ENCODE measurements at regions of chr12 and their contacts with region 1.

Region 1: GRCh38 chr12:89542912-89543592 is 17.2 kb upstream of the POC1B start:
- DNase-seq: peak; percentile 64 to 72 (median 69)
- H3K4me3 ChIP-seq: no peak overlapping the region
- H3K4me3 Mint-ChIP-seq: peak overlapping the region in 1 of 8 donors; percentile 18
- H3K27ac ChIP-seq: no peak overlapping the region
- H3K27ac Mint-ChIP-seq: peak overlapping the region in 4 of 7 donors; percentile 14 to 41 (median 36)
- H3K4me1 ChIP-seq: no peaks in the 10 kb centered on the region
- H3K4me1 Mint-ChIP-seq: peaks cover 4 to 16% (median 10%) of the 10 kb centered on the region in 4 donors
- H3K27me3 ChIP-seq: no peaks in the 10 kb centered on the region
- H3K27me3 Mint-ChIP-seq: peaks cover 0 to 3% of the 10 kb centered on the region in 2 donors

Region 2: DNA sequence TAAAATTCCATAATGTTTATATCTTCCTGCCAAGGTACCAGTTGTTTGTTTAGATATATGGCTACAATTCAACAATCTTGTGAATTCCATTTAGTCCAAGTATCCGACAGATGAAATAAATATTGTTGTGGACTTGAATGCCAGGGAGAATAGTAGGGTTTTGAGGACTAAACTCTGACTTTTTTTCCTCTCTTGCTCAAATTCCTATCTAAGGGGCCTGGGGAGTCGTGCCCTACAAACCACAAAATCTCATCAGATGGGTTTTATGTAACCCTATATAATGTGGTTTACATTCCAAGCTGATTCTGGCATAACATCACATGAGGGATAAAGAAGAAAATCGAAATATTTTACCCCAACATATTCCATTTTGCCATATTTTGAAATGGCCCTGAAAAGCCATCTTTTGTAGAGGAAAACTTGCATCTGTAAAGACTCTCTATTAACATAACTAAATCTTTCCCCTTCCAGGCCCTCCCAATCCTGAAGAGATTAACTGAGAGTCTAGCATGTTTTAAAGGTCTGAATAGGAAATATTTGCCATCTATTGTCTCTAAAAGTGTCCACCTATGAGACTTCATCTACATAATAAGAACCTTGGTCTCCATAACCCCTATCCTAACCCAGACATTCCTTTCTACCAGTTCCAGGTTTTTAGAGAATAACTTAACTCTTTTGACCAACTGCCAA is 778.1 kb before region 1 on chr12:
- CTCF ChIA-PET with region 1: no interaction called
- POLR2A ChIA-PET with region 1: no interaction called
- intact Hi-C with region 1: no loop called
- DNase-seq: no peak
- H3K4me3 ChIP-seq: no peak overlapping the region
- H3K4me3 Mint-ChIP-seq: no peak overlapping the region
- H3K27ac ChIP-seq: no peak overlapping the region
- H3K27ac Mint-ChIP-seq: no peak overlapping the region
- H3K4me1 ChIP-seq: no peaks in the 10 kb centered on the region
- H3K4me1 Mint-ChIP-seq: no peaks in the 10 kb centered on the region
- H3K27me3 ChIP-seq: no peaks in the 10 kb centered on the region
- H3K27me3 Mint-ChIP-seq: no peaks in the 10 kb centered on the region

Region 3: GRCh38 chr12:89192428-89192827 is 350.6 kb before region 1 on chr12:
- CTCF ChIA-PET with region 1: no interaction called
- POLR2A ChIA-PET with region 1: no interaction called
- intact Hi-C with region 1: no loop called
- DNase-seq: no peak
- H3K4me3 ChIP-seq: no peak overlapping the region
- H3K4me3 Mint-ChIP-seq: no peak overlapping the region
- H3K27ac ChIP-seq: no peak overlapping the region
- H3K27ac Mint-ChIP-seq: no peak overlapping the region
- H3K4me1 ChIP-seq: no peaks in the 10 kb centered on the region
- H3K4me1 Mint-ChIP-seq: no peaks in the 10 kb centered on the region
- H3K27me3 ChIP-seq: no peaks in the 10 kb centered on the region
- H3K27me3 Mint-ChIP-seq: no peaks in the 10 kb centered on the region

Region 4: GRCh38 chr12:89363084-89363483 is 180.0 kb before region 1 on chr12:
- CTCF ChIA-PET with region 1: no interaction called
- POLR2A ChIA-PET with region 1: no interaction called
- intact Hi-C with region 1: no loop called
- DNase-seq: no peak
- H3K4me3 ChIP-seq: no peak overlapping the region
- H3K4me3 Mint-ChIP-seq: no peak overlapping the region
- H3K27ac ChIP-seq: no peak overlapping the region
- H3K27ac Mint-ChIP-seq: no peak overlapping the region
- H3K4me1 ChIP-seq: no peaks in the 10 kb centered on the region
- H3K4me1 Mint-ChIP-seq: peaks cover 0 to 1% (median 0%) of the 10 kb centered on the region in 4 donors
- H3K27me3 ChIP-seq: no peaks in the 10 kb centered on the region
- H3K27me3 Mint-ChIP-seq: no peaks in the 10 kb centered on the region

Region 5: DNA sequence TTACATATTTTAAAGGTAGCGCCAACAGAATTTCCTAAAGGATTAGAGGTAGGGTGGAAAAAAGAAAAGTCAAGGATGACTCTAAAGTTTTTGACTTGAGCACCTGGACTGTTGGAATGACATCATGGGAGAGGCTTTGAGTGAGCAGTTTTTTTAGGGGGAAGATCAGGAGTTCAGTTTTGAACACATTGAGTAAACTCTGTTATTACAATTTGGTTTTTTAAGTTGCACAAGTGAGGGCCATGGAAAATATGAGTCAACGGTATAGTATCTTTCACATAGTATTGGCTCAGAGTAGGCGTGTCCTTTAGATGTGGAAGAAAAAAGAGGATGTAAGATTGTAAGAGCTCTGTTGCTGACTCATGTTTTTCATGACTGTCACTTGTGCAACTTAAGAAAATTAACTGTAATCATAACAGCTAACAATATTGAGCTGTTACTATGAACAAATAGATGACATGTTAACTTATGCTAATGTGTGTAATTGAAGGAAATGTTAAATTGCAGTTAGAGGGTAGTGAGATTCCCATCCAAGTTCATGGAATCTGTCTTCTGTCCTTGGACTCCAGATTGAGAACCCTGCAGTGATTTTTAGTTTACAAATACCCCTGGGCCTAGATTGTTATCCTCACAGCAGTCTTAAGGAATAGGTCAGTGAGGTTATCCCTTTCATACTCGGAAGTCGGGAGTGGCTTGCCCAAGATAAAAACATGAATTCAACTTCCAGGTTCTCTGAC is 213.7 kb after region 1 on chr12:
- CTCF ChIA-PET with region 1: no interaction called
- POLR2A ChIA-PET with region 1: no interaction called
- intact Hi-C with region 1: no loop called
- DNase-seq: peak; percentile 33 to 63 (median 59)
- H3K4me3 ChIP-seq: no peak overlapping the region
- H3K4me3 Mint-ChIP-seq: peak overlapping the region in 3 of 8 donors; percentile 21 to 60 (median 47)
- H3K27ac ChIP-seq: no peak overlapping the region
- H3K27ac Mint-ChIP-seq: peak overlapping the region; percentile 54 to 92 (median 76)
- H3K4me1 ChIP-seq: peaks cover 43% of the 10 kb centered on the region
- H3K4me1 Mint-ChIP-seq: peaks cover 38 to 54% (median 44%) of the 10 kb centered on the region in 4 donors
- H3K27me3 ChIP-seq: no peaks in the 10 kb centered on the region
- H3K27me3 Mint-ChIP-seq: no peaks in the 10 kb centered on the region

Region 6: GRCh38 chr12:89856431-89856830 is 313.4 kb after region 1 on chr12:
- CTCF ChIA-PET with region 1: interaction called, 51 read pairs
- POLR2A ChIA-PET with region 1: no interaction called
- intact Hi-C with region 1: loop called (anchors 1 kb)
- DNase-seq: no peak
- H3K4me3 ChIP-seq: no peak overlapping the region
- H3K4me3 Mint-ChIP-seq: peak overlapping the region in 5 of 8 donors; percentile 32 to 61 (median 47)
- H3K27ac ChIP-seq: no peak overlapping the region
- H3K27ac Mint-ChIP-seq: peak overlapping the region in 6 of 7 donors; percentile 13 to 78 (median 50)
- H3K4me1 ChIP-seq: peaks cover 42% of the 10 kb centered on the region
- H3K4me1 Mint-ChIP-seq: peaks cover 36 to 65% (median 45%) of the 10 kb centered on the region in 4 donors
- H3K27me3 ChIP-seq: no peaks in the 10 kb centered on the region
- H3K27me3 Mint-ChIP-seq: no peaks in the 10 kb centered on the region

Region 7: DNA sequence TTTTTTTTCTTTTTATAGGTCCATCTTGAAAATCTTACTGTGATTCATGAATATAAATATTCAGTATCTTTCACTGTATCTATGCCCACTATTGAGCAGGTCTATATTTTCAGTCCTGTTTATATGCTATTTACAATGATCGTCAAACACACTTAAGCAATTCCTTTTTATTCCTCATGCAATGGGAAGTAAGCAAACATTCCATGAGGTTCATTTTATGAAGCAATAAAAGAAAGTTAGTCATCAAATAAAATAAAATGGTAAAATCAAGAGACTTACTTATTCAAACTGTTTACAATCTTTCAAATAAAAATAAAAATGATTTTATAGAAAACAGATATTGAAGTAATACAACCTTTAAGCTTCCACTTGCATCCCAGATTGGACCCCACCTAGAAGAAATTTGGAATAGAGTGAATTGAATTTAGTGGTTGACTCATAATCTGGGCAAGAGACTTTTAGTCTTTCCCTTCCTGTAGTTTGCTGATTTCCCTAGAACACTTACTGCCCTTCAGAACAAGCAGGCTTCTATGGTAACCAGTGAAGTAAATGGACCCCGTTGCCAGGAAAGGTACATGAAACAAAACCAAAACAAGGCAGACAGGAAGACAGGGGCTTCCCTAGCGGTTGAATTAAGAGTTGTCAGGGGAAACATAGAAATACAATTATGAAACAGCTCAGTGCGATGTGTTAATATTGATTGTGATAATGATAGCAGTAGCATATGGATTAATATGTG is 406.6 kb after region 1 on chr12:
- CTCF ChIA-PET with region 1: interaction called, 11 read pairs
- POLR2A ChIA-PET with region 1: no interaction called
- intact Hi-C with region 1: loop called (anchors 1 kb)
- DNase-seq: peak; percentile 87 to 94 (median 90)
- H3K4me3 ChIP-seq: no peak overlapping the region
- H3K4me3 Mint-ChIP-seq: peak overlapping the region; percentile 11 to 77 (median 59)
- H3K27ac ChIP-seq: peak overlapping the region; percentile 83
- H3K27ac Mint-ChIP-seq: peak overlapping the region; percentile 74 to 98 (median 93)
- H3K4me1 ChIP-seq: peaks cover 53% of the 10 kb centered on the region
- H3K4me1 Mint-ChIP-seq: peaks cover 49 to 64% (median 58%) of the 10 kb centered on the region in 4 donors
- H3K27me3 ChIP-seq: no peaks in the 10 kb centered on the region
- H3K27me3 Mint-ChIP-seq: no peaks in the 10 kb centered on the region

Region 8: GRCh38 chr12:90062799-90063198 is 519.7 kb after region 1 on chr12:
- CTCF ChIA-PET with region 1: no interaction called
- POLR2A ChIA-PET with region 1: no interaction called
- intact Hi-C with region 1: loop called (anchors 1 kb)
- DNase-seq: no peak
- H3K4me3 ChIP-seq: no peak overlapping the region
- H3K4me3 Mint-ChIP-seq: no peak overlapping the region
- H3K27ac ChIP-seq: no peak overlapping the region
- H3K27ac Mint-ChIP-seq: no peak overlapping the region
- H3K4me1 ChIP-seq: no peaks in the 10 kb centered on the region
- H3K4me1 Mint-ChIP-seq: peaks cover 0 to 1% (median under 1%) of the 10 kb centered on the region in 4 donors
- H3K27me3 ChIP-seq: no peaks in the 10 kb centered on the region
- H3K27me3 Mint-ChIP-seq: no peaks in the 10 kb centered on the region

Region 9: DNA sequence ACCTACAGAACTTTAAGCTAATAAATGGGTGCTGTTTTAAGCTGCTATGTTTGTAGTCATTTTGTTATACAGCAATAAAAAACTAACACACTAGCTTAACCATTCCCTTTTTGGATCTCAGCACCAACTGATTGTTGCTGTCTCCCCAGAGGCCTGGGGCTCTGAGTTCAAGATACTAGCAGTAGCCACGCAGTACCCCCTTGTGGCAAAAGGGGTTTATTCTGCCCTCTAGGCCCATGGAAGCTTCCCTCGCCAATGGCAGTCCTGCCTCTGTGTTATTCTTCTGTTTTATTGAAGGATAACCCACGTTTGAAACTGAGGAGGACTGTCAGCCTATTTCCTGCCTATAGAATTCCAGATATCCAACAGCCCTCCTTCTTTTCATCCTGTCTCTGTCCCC is 620.9 kb after region 1 on chr12:
- CTCF ChIA-PET with region 1: interaction called, 21 read pairs
- POLR2A ChIA-PET with region 1: no interaction called
- intact Hi-C with region 1: no loop called
- DNase-seq: no peak
- H3K4me3 ChIP-seq: no peak overlapping the region
- H3K4me3 Mint-ChIP-seq: no peak overlapping the region
- H3K27ac ChIP-seq: no peak overlapping the region
- H3K27ac Mint-ChIP-seq: no peak overlapping the region
- H3K4me1 ChIP-seq: no peaks in the 10 kb centered on the region
- H3K4me1 Mint-ChIP-seq: no peaks in the 10 kb centered on the region
- H3K27me3 ChIP-seq: no peaks in the 10 kb centered on the region
- H3K27me3 Mint-ChIP-seq: no peaks in the 10 kb centered on the region

Region 10: DNA sequence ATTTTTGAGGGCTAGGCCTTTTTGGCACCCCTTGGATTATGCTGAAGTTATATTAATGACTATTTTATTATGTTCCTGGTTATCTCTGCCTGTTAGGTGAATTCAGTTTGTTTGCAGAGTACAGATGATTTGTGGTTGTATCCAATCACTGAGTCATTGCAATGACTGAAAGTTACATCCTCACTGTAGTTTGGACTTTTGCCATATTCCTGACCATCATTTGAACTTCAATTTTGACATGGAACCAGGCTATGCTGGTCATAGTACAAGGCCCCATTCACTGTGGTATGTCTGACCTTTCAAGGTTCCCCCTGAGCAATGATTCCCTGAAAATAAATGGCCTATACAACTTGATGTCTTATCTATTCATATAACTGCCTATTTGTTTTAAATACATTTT is 790.9 kb after region 1 on chr12:
- CTCF ChIA-PET with region 1: no interaction called
- POLR2A ChIA-PET with region 1: no interaction called
- intact Hi-C with region 1: loop called (anchors 10 kb)
- DNase-seq: no peak
- H3K4me3 ChIP-seq: no peak overlapping the region
- H3K4me3 Mint-ChIP-seq: no peak overlapping the region
- H3K27ac ChIP-seq: no peak overlapping the region
- H3K27ac Mint-ChIP-seq: no peak overlapping the region
- H3K4me1 ChIP-seq: no peaks in the 10 kb centered on the region
- H3K4me1 Mint-ChIP-seq: no peaks in the 10 kb centered on the region
- H3K27me3 ChIP-seq: no peaks in the 10 kb centered on the region
- H3K27me3 Mint-ChIP-seq: no peaks in the 10 kb centered on the region

Region 11: DNA sequence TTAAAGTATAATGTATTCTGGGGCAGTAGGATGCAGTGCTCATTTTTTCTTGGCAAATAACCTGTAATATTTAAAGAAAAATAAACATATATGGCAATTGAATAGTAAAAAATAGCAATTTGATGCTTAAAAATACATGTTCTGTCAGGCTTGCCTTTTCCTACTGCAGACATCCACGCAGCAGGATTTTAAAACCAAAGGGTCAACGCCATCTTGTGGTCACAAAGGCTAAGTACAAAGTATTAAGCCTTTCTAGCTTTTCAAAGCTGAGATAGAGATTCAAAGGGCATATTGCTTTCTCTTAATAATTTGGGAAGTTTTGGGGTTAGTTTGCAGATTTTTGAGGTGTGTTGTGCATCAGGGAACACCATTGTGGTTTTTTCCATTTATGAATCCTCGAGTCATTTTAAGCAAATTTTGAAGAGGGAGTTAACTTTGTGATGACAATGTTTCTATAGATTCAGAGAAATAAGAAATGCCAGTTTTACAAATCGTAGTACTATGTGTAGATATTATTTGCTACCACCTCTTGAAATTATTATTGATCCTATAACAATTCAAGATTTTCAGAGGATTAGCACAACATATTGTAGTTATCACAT is 1416.6 kb after region 1 on chr12:
- CTCF ChIA-PET with region 1: interaction called, 13 read pairs
- POLR2A ChIA-PET with region 1: no interaction called
- intact Hi-C with region 1: loop called (anchors 1 kb)
- DNase-seq: peak in 4 of 5 donors; percentile 22 to 30 (median 28)
- H3K4me3 ChIP-seq: no peak overlapping the region
- H3K4me3 Mint-ChIP-seq: no peak overlapping the region
- H3K27ac ChIP-seq: no peak overlapping the region
- H3K27ac Mint-ChIP-seq: no peak overlapping the region
- H3K4me1 ChIP-seq: no peaks in the 10 kb centered on the region
- H3K4me1 Mint-ChIP-seq: no peaks in the 10 kb centered on the region
- H3K27me3 ChIP-seq: no peaks in the 10 kb centered on the region
- H3K27me3 Mint-ChIP-seq: no peaks in the 10 kb centered on the region

Measured in CD4-positive, alpha-beta memory T cell (primary cell).